Head of caudate nucleus (tissue), 42 donors: ENCODE measurements at regions of chr12 and their contacts with region 1.

Region 1: GRCh38 chr12:121688966-121689365 is 19.5 kb upstream of the MORN3 start:
- DNase-seq: no peak

Region 2: GRCh38 chr12:121579981-121580868 is 108.7 kb before region 1 on chr12:
- intact Hi-C with region 1: loop called (anchors 5 kb)
- DNase-seq: peak; percentile 62 to 90 (median 80)